Transverse colon (tissue), 4 donors: ENCODE measurements at regions of chr1 and their contacts with region 1.

Region 1: GRCh38 chr1:160437432-160438316 is 37.3 kb downstream of the VANGL2 start:
- DNase-seq: no peak
- H3K4me3 ChIP-seq: no peak overlapping the region
- H3K27ac ChIP-seq: peak overlapping the region; percentile 10 to 53 (median 46)
- H3K4me1 ChIP-seq: peaks cover 0 to 7% (median 2%) of the 10 kb centered on the region in 4 donors
- H3K27me3 ChIP-seq: no peaks in the 10 kb centered on the region
- CTCF ChIP-seq: no peak
- EP300 ChIP-seq: no peak
- POLR2A ChIP-seq: no peak

Region 2: GRCh38 chr1:160539990-160540858 is 102.5 kb after region 1 on chr1:
- in situ Hi-C with region 1: loop called in 1 of 4 experiments (anchors 10 kb)
- intact Hi-C with region 1: no loop called
- DNase-seq: peak; percentile 64
- H3K4me3 ChIP-seq: no peak overlapping the region
- H3K27ac ChIP-seq: peak overlapping the region; percentile 83 to 88 (median 85)
- H3K4me1 ChIP-seq: peaks cover 0 to 50% (median 23%) of the 10 kb centered on the region in 4 donors
- H3K27me3 ChIP-seq: no peaks in the 10 kb centered on the region
- CTCF ChIP-seq: no peak
- EP300 ChIP-seq: no peak
- POLR2A ChIP-seq: no peak